ENCODE measurements at regions of chr2 and their contacts with region 1.

Region 1: GRCh38 chr2:218979846-218980734 is 4.9 kb downstream of the FEV start:
- DNase-seq: peak; percentile 65
- ATAC-seq: peak; percentile 97
- H3K4me3 ChIP-seq: no peak overlapping the region
- H3K27ac ChIP-seq: no peak overlapping the region
- H3K4me1 ChIP-seq: 0 out of 2 replicates have a peak, but pooled peaks cover 2% of the 10 kb centered on the region
- H3K27me3 ChIP-seq: peaks cover 74% of the 10 kb centered on the region
- CTCF ChIP-seq: peak; percentile 72
- POLR2A ChIP-seq: no peak
- RAD21 ChIP-seq: peak; percentile 59

Region 2: DNA sequence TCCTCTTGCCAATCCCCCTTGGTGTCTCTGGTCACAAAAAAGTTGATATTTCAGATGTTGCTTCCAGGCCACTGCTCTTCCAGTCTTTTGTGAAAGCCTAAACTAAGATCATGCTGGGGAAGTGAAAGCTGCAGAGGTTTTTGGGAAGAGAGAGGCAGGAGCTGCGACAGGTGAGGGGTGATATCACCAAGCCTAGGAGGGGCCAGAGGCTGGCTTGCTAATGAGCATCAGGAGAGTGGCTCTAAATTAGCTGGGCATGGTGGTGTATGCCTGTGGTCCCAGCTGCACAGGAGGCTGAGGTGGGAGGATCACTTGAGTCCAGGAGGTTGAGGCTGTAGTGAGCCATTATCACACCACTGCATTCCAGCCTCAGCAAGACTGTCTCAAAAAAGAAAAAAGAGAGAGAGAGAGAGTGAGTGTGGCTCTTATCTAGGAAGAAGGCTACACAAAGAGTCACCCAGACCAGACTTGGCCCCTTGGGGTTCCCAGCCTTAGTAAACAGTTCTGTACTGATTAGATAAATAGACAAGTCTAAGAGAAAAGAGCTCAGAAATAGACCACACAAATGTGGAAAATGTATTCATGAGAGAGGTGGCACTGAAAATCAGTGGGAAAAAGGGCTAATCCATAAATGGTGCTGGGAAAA is 35.2 kb before region 1 on chr2:
- CTCF ChIA-PET with region 1: no interaction called
- POLR2A ChIA-PET with region 1: no interaction called
- dilution Hi-C with region 1: no loop called
- in situ Hi-C with region 1: no loop called
- intact Hi-C with region 1: no loop called
- DNase-seq: no peak
- ATAC-seq: no peak
- H3K4me3 ChIP-seq: no peak overlapping the region
- H3K27ac ChIP-seq: no peak overlapping the region
- H3K4me1 ChIP-seq: no peaks in the 10 kb centered on the region
- H3K27me3 ChIP-seq: peaks cover 16% of the 10 kb centered on the region
- CTCF ChIP-seq: no peak
- POLR2A ChIP-seq: no peak
- RAD21 ChIP-seq: no peak

Region 3: GRCh38 chr2:218962859-218963492 is 17.1 kb before region 1 on chr2:
- CTCF ChIA-PET with region 1: interaction called, 10 read pairs
- POLR2A ChIA-PET with region 1: no interaction called
- dilution Hi-C with region 1: no loop called
- in situ Hi-C with region 1: no loop called
- intact Hi-C with region 1: no loop called
- DNase-seq: peak; percentile 73
- ATAC-seq: peak; percentile 19; the same call in 1 of the 2 replicates
- H3K4me3 ChIP-seq: no peak overlapping the region
- H3K27ac ChIP-seq: no peak overlapping the region
- H3K4me1 ChIP-seq: no peaks in the 10 kb centered on the region
- H3K27me3 ChIP-seq: peaks cover 51% of the 10 kb centered on the region
- CTCF ChIP-seq: no peak
- POLR2A ChIP-seq: no peak
- RAD21 ChIP-seq: no peak

Measured in IMR-90 (cell line).